ENCODE measurements at regions of chr6 and their contacts with region 1.

Region 1: DNA sequence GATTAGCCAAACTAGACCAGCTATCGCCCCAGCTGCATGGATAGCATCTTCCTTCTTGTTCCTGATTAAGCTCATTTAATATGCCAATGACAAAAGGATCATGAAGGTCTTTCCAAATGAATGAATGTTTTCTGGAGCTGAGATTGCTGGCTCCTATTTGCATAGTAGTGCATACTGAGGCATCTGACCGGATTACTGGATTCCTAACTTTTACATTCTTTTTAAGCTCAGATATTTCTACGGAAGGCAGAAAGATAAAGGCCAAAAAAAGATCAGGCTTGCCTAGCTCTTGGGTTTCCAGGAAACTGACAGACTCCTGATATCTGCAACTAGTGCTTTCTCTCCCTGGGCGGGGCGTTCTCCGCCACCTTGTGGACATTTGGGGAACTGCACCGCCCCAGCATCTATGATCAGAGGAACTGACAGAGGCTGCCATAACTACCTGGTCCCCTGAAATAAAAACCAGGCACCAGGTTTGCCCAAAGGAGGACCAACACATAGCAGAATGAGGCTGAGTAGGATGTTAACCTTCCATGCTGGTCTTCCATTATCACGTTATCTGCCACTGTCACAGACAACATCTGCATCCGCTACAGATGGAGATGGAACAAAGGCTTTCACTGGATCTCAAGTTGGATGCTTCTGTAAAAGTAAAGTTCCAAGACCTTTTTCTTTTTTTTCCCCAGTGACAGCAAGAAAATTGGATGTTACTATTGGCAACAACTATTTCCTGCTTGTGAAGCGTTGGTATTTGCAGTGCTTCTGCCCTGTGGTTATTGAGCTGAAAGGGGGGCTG is 33.2 kb downstream of the NT5E start:
- DNase-seq: peak; percentile 91
- ATAC-seq: peak; percentile 96
- H3K4me3 Mint-ChIP-seq: no peak overlapping the region
- H3K27ac Mint-ChIP-seq: peak overlapping the region; percentile 23
- H3K4me1 Mint-ChIP-seq: peaks cover 9% of the 10 kb centered on the region
- H3K27me3 Mint-ChIP-seq: no peaks in the 10 kb centered on the region

Region 2: DNA sequence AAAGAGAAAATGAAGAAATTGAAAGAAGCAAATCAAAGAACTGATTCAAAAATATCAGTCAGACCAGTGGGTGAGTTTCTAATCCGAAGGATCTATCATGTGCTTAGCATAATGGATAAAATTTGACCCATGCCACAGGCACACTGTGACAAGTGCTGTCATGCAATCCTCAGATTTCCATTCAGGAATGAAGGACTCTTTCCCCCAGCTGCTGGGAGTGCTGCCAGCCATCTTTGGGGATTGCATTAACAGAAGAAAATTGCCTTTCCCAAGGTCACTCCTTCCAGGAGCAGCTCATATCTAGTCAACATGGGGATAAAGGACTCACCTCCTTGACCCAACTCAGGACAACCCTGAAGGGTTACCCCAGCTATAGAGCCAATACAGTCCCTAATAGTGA is 402.0 kb before region 1 on chr6:
- CTCF ChIA-PET with region 1: no interaction called
- POLR2A ChIA-PET with region 1: no interaction called
- intact Hi-C with region 1: no loop called
- DNase-seq: no peak
- ATAC-seq: no peak
- H3K4me3 Mint-ChIP-seq: no peak overlapping the region
- H3K27ac Mint-ChIP-seq: no peak overlapping the region
- H3K4me1 Mint-ChIP-seq: no peaks in the 10 kb centered on the region
- H3K27me3 Mint-ChIP-seq: peaks cover 2% of the 10 kb centered on the region

Region 3: DNA sequence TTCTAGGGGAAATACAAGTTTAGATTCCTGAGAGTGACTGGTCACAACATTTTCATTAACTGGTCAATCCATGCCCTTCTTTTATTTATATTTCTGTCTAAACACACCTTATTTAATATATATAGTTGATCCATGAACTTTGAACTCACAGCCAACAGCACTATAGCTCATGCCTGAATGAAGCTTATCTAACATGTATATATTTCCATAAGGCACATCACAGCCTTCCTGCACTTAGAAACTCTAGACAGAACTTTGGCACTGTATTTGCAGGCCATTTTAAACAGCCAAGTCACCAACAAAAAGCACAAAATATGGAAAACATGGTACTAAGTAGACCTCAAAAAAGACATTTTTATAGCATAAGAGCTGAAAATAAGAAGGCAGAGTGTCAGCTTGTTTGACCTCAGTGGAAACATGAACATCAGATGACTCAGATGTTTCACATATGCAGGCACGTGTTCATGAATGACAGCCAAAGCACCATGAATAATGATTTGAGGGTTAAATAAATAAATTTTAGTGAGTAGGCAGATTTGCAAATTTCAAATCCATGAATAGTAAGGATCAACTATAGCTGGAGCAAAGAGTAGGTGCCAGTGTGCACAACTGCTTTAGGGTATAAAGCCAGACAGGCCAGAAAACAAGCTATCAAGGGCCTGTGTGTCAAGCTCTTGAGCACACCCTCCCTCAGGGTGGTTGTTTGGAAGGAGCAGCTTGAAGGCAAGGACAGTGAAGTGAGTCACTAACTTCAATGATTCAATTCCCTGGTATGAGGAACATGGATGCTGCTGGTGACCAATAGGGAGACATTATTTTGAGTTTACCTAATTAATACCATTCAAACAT is 122.1 kb before region 1 on chr6:
- CTCF ChIA-PET with region 1: interaction called, 72 read pairs
- POLR2A ChIA-PET with region 1: interaction called, 3 read pairs
- intact Hi-C with region 1: no loop called
- DNase-seq: no peak
- ATAC-seq: peak; percentile 69
- H3K4me3 Mint-ChIP-seq: no peak overlapping the region
- H3K27ac Mint-ChIP-seq: no peak overlapping the region
- H3K4me1 Mint-ChIP-seq: peaks cover 7% of the 10 kb centered on the region
- H3K27me3 Mint-ChIP-seq: peaks cover 6% of the 10 kb centered on the region

Region 4: DNA sequence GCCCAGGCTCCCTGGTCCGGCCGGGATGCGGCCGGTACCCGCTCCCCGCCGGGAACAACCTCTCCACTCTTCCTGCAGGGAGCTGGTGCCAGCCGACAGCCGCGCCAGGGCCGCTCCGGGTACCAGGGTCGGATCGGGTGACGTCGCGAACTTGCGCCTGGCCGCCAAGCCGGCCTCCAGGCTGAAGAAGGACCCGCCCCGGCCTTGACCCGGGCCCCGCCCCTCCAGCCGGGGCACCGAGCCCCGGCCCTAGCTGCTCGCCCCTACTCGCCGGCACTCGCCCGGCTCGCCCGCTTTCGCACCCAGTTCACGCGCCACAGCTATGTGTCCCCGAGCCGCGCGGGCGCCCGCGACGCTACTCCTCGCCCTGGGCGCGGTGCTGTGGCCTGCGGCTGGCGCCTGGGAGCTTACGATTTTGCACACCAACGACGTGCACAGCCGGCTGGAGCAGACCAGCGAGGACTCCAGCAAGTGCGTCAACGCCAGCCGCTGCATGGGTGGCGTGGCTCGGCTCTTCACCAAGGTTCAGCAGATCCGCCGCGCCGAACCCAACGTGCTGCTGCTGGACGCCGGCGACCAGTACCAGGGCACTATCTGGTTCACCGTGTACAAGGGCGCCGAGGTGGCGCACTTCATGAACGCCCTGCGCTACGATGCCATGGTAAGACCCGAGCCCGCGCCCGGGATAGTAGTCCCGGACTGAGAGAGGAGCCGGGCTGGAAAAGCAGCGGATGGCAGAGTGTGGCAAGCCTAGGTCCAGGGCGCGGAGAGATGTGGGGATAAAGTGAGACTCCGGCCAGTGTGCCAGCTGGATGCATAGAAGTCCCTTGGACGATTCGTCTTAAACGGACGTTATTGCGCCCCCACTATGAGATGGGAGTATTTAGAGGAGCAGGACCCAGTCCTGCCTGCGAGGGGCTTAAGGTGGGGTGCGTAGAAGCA is 33.0 kb before region 1 on chr6 and contains the start of gene NT5E:
- CTCF ChIA-PET with region 1: interaction called, 36 read pairs
- POLR2A ChIA-PET with region 1: no interaction called
- intact Hi-C with region 1: loop called (anchors 1 to 5 kb)
- DNase-seq: peak; percentile 74
- ATAC-seq: peak; percentile 72
- H3K4me3 Mint-ChIP-seq: peak within 1 kb of the TSS; percentile 81
- H3K27ac Mint-ChIP-seq: peak within 1 kb of the TSS; percentile 87
- H3K4me1 Mint-ChIP-seq: peaks cover 53% of the 10 kb centered on the region
- H3K27me3 Mint-ChIP-seq: peaks cover 49% of the 10 kb centered on the region
- total RNA-seq, gene NT5E: 3.8 to 4.9 TPM

Region 5: GRCh38 chr6:85468261-85468660 is 14.8 kb before region 1 on chr6:
- CTCF ChIA-PET with region 1: interaction called, 18 read pairs
- POLR2A ChIA-PET with region 1: no interaction called
- intact Hi-C with region 1: loop called in 1 of 2 experiments (anchors 1 kb)
- DNase-seq: no peak
- ATAC-seq: no peak
- H3K4me3 Mint-ChIP-seq: no peak overlapping the region
- H3K27ac Mint-ChIP-seq: no peak overlapping the region
- H3K4me1 Mint-ChIP-seq: peaks cover 40% of the 10 kb centered on the region
- H3K27me3 Mint-ChIP-seq: peaks cover 2% of the 10 kb centered on the region

Region 6: GRCh38 chr6:85537055-85537494 is 54.0 kb after region 1 on chr6:
- CTCF ChIA-PET with region 1: interaction called, 12 read pairs
- POLR2A ChIA-PET with region 1: no interaction called
- intact Hi-C with region 1: no loop called
- DNase-seq: no peak
- ATAC-seq: no peak
- H3K4me3 Mint-ChIP-seq: no peak overlapping the region
- H3K27ac Mint-ChIP-seq: no peak overlapping the region
- H3K4me1 Mint-ChIP-seq: peaks cover 2% of the 10 kb centered on the region
- H3K27me3 Mint-ChIP-seq: no peaks in the 10 kb centered on the region

Region 7: GRCh38 chr6:85714893-85715530 is 231.9 kb after region 1 on chr6:
- CTCF ChIA-PET with region 1: no interaction called
- POLR2A ChIA-PET with region 1: no interaction called
- intact Hi-C with region 1: no loop called
- DNase-seq: no peak
- ATAC-seq: no peak
- H3K4me3 Mint-ChIP-seq: no peak overlapping the region
- H3K27ac Mint-ChIP-seq: no peak overlapping the region
- H3K4me1 Mint-ChIP-seq: no peaks in the 10 kb centered on the region
- H3K27me3 Mint-ChIP-seq: peaks cover 6% of the 10 kb centered on the region

Region 8: DNA sequence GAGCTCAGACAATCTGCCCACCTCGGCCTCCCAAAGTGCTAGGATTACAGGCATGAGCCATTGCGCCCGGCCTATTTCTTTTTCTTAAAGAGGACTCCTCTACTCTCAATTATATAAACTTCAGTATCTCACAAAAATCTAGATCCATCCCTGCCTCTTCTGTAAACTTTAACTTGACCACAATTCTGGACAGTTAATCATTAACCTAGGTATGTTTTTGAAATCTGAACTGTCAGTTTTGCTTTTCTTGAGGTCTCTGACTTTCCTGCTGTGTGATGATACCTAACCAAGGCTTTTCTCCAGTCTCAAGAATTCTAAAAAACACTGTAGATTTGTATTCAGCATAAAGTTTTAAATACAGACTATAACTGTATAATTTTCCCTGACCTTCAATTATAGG is 547.8 kb after region 1 on chr6:
- CTCF ChIA-PET with region 1: no interaction called
- POLR2A ChIA-PET with region 1: no interaction called
- intact Hi-C with region 1: no loop called
- DNase-seq: no peak
- ATAC-seq: no peak
- H3K4me3 Mint-ChIP-seq: no peak overlapping the region
- H3K27ac Mint-ChIP-seq: no peak overlapping the region
- H3K4me1 Mint-ChIP-seq: no peaks in the 10 kb centered on the region
- H3K27me3 Mint-ChIP-seq: no peaks in the 10 kb centered on the region